Activated CD4-positive, alpha-beta T cell treated with anti-CD3 and anti-CD28 coated beads, Interleukin-2, amount 10 ng/mL, durations not matched to agents 24 days and 14 days (primary cell): ENCODE measurements at regions of chr6 and their contacts with region 1.

Region 1: GRCh38 chr6:8063761-8064637 is at the start of gene BLOC1S5:
- DNase-seq: peak; percentile 99
- H3K4me3 Mint-ChIP-seq: peak within 1 kb of the TSS; percentile 97
- H3K27ac Mint-ChIP-seq: peak within 1 kb of the TSS; percentile 98
- H3K4me1 Mint-ChIP-seq: peaks cover 23% of the 10 kb centered on the region
- H3K27me3 Mint-ChIP-seq: no peaks in the 10 kb centered on the region
- total RNA-seq, gene BLOC1S5: 15.7 and 19.6 TPM in 2 replicates

Region 2: GRCh38 chr6:7589949-7590917 is 473.8 kb before region 1 on chr6 and contains the start of gene SNRNP48:
- intact Hi-C with region 1: loop called (anchors 2 kb)
- DNase-seq: peak; percentile 98
- H3K4me3 Mint-ChIP-seq: peak within 1 kb of the TSS; percentile 100
- H3K27ac Mint-ChIP-seq: peak within 1 kb of the TSS; percentile 96
- H3K4me1 Mint-ChIP-seq: peaks cover 30% of the 10 kb centered on the region
- H3K27me3 Mint-ChIP-seq: peaks cover 7% of the 10 kb centered on the region
- total RNA-seq, gene SNRNP48: 18.4 and 19.6 TPM in 2 replicates

Region 3: GRCh38 chr6:7910654-7911344 is 153.2 kb before region 1 on chr6 and contains the start of gene TXNDC5:
- intact Hi-C with region 1: loop called (anchors 2 kb)
- DNase-seq: peak; percentile 93
- H3K4me3 Mint-ChIP-seq: peak within 1 kb of the TSS; percentile 92
- H3K27ac Mint-ChIP-seq: peak within 1 kb of the TSS; percentile 81
- H3K4me1 Mint-ChIP-seq: peaks cover 17% of the 10 kb centered on the region
- H3K27me3 Mint-ChIP-seq: no peaks in the 10 kb centered on the region
- total RNA-seq, gene TXNDC5: 111 and 112 TPM in 2 replicates

Region 4: GRCh38 chr6:8082954-8083858 is 19.2 kb after region 1 on chr6:
- intact Hi-C with region 1: loop called (anchors 1 kb)
- DNase-seq: no peak
- H3K4me3 Mint-ChIP-seq: no peak overlapping the region
- H3K27ac Mint-ChIP-seq: peak overlapping the region; percentile 83
- H3K4me1 Mint-ChIP-seq: peaks cover 28% of the 10 kb centered on the region
- H3K27me3 Mint-ChIP-seq: no peaks in the 10 kb centered on the region

Region 5: DNA sequence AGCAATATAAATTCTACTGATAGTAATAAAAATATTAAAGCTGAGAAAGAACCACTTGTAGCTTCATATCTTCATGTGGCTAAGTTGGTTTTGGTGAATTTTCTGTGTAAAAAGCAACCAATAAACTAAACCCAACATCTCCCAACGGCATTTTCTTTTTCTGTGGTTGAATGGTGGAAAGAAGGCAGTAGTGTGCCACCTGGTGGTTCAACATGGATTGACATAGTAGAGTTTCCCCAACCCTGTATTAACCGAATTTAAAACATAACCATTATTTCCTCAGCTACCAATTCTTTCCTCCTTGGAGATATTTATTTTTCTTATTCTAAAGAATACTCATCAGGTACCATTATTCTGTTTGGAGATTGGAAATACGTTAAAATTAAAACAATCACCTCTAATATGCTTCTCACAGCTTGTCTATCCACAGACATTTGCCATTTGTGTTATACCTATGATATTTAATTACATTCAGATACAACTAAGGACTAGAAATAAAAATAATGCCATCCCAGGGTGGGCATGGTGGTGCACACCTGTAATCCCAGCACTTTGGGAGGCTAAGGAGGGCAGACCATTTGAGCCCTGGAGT is 155.4 kb after region 1 on chr6:
- intact Hi-C with region 1: loop called (anchors 2 kb)
- DNase-seq: peak; percentile 77
- H3K4me3 Mint-ChIP-seq: no peak overlapping the region
- H3K27ac Mint-ChIP-seq: no peak overlapping the region
- H3K4me1 Mint-ChIP-seq: no peaks in the 10 kb centered on the region
- H3K27me3 Mint-ChIP-seq: peaks cover 2% of the 10 kb centered on the region